HepG2 (cell line): ENCODE measurements at regions of chr18 and their contacts with region 1.

Region 1: DNA sequence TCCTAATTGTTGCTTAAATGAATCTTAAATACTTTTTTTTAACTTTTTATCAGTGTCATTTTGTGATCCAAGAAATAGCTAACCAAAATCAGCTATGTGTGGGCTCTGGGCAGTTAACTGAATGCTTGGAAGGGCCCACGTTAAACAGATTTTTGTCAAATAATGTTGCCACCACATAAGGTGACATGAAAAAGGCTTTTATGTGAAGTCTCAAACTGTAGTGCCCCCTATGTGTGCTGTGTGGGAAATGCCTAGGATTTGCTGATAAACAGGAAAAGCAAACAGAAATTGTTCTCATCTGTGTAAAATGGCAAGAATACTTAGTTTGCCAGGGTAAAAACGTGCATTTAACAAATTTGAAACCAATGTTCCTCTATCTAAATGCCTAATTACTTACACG is 242.2 kb downstream of the ZNF516 start:
- DNase-seq: no peak
- ATAC-seq: no peak
- H3K4me3 ChIP-seq: no peak overlapping the region
- H3K27ac ChIP-seq: no peak overlapping the region
- H3K4me1 ChIP-seq: no peaks in the 10 kb centered on the region
- H3K27me3 ChIP-seq: peaks cover 0 to 24% of the 10 kb centered on the region in 2 experiments; a peak in 3 of 5 replicates
- CTCF ChIP-seq: peak; percentile 38
- EP300 ChIP-seq: no peak
- POLR2A ChIP-seq: no peak
- RAD21 ChIP-seq: no peak

Region 2: GRCh38 chr18:75884728-75885127 is 368.2 kb before region 1 on chr18:
- CTCF ChIA-PET with region 1: no interaction called
- POLR2A ChIA-PET with region 1: no interaction called
- in situ Hi-C with region 1: no loop called
- intact Hi-C with region 1: loop called (anchors 10 kb)
- DNase-seq: no peak
- ATAC-seq: no peak
- H3K4me3 ChIP-seq: no peak overlapping the region
- H3K27ac ChIP-seq: no peak overlapping the region
- H3K4me1 ChIP-seq: no peaks in the 10 kb centered on the region
- H3K27me3 ChIP-seq: no peaks in the 10 kb centered on the region
- CTCF ChIP-seq: peak; percentile 33; the same call in 1 of the 2 replicates
- EP300 ChIP-seq: no peak
- POLR2A ChIP-seq: no peak
- RAD21 ChIP-seq: no peak

Region 3: DNA sequence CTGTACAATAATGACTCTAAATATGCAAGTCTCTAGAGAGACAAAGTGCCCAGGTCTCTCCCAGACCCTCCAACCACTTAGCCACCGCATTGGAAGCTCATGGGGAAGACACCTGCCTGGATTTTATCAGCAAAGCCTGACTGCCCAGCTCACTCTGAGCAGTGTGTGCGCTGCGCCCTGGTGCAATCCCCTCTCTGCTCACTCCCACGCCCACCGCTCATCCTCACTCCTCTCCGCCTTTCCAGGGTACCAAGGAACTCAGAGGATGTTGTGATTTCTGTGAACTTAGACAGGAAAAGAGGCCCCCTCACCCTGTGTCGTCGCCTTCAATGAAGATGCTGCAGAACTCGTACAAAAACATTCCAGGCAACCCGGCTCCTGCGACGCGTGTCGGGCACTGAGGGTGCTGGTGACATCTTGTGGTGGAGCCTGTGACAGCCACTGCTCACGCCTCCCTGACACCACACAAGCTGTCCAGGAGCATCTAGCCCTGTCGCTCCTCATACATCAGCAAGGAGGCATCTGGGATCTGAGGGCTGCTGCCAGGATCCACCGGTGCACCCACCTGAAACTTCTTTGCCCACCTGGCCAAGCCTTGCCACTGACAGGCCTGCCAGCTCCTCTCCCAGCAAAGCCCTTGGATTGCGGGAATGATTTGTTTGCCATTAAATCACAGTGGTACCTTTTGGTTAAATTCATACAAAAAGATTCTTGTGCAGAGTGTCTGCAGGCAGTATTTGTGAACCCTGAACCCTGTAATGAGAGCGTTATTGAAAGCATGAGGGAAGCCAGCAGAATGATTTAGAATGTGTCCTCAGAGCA is 21.8 kb after region 1 on chr18:
- CTCF ChIA-PET with region 1: no interaction called
- POLR2A ChIA-PET with region 1: no interaction called
- in situ Hi-C with region 1: no loop called
- intact Hi-C with region 1: loop called (anchors 1 kb)
- DNase-seq: peak; percentile 17
- ATAC-seq: peak; percentile 95
- H3K4me3 ChIP-seq: no peak overlapping the region
- H3K27ac ChIP-seq: no peak overlapping the region
- H3K4me1 ChIP-seq: peaks cover 10% of the 10 kb centered on the region
- H3K27me3 ChIP-seq: peaks cover 0 to 23% of the 10 kb centered on the region in 2 experiments; a peak in 3 of 5 replicates
- CTCF ChIP-seq: peak; percentile 77
- EP300 ChIP-seq: no peak
- POLR2A ChIP-seq: no peak
- RAD21 ChIP-seq: 0 out of 2 replicates have a peak, but pooled peaks have one; percentile 34